CD8-positive, alpha-beta memory T cell (primary cell): ENCODE measurements at regions of chr12 and their contacts with region 1.

Region 1: DNA sequence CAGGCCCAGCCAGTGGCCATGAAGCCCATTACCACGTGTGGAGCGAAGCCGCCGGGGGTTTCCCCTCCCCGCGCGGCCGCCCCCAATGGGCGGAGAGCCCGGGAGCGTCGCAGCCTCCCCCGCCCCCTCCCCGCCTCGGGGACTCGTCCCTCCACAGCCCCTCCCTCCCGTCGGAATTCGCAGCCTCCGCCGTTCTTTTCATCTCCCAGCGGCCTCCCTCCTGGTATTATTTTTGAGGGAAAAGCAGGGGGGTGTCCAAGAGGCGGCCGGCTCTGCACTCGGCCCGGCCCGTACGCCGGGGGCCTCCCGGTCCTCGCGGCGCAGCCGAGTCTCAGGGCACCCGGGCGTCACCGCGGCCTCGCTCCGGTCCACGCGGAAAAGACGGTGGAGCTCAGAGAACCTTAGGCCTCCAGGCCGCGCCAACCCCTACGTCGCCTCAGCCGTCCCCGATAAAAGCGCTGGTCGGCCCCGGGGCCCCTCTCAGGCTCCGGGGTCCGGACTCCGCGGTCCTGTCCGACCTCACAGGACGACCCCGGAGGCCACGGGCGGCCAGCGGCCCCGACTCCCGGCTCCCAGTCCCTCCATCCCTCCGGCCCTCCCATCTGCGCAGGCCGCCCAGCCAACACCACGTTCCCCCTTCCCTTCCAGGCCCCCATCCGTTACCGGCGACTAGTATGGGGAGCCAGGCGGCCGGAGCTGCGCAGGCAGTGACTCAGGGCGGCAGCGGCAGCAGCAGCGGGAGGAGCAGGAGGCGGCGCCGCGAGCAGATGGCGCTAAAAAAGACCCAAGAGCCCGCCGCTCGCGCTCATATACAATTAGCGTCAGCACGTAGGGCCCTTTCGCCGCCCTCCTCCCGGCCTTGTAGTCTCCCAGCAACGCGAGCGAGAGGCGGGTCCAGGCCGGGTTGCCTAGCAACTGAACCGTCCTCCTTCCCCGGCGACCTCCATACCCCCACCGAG is at the start of gene NAP1L1:
- DNase-seq: peak; percentile 94 to 99 (median 96)
- H3K4me3 ChIP-seq: peak within 1 kb of the TSS; percentile 68
- H3K4me3 Mint-ChIP-seq: peak within 1 kb of the TSS; percentile 96 to 100 (median 98)
- H3K27ac ChIP-seq: peak within 1 kb of the TSS; percentile 97
- H3K27ac Mint-ChIP-seq: peak within 1 kb of the TSS; percentile 98 to 100 (median 99)
- H3K4me1 ChIP-seq: peaks cover 39% of the 10 kb centered on the region
- H3K4me1 Mint-ChIP-seq: peaks cover 50 to 66% (median 59%) of the 10 kb centered on the region in 3 donors
- H3K27me3 ChIP-seq: no peaks in the 10 kb centered on the region
- H3K27me3 Mint-ChIP-seq: peaks cover 0 to 4% of the 10 kb centered on the region in 2 donors
- total RNA-seq, gene NAP1L1: 926 to 964 TPM

Region 2: GRCh38 chr12:76348079-76348901 is 264.1 kb after region 1 on chr12 and contains the start of gene BBS10:
- CTCF ChIA-PET with region 1: no interaction called
- POLR2A ChIA-PET with region 1: interaction called, 11 read pairs
- DNase-seq: peak; percentile 73 to 88 (median 82)
- H3K4me3 ChIP-seq: peak within 1 kb of the TSS; percentile 85
- H3K4me3 Mint-ChIP-seq: peak within 1 kb of the TSS; percentile 94 to 100 (median 97)
- H3K27ac ChIP-seq: peak within 1 kb of the TSS; percentile 73
- H3K27ac Mint-ChIP-seq: peak within 1 kb of the TSS; percentile 82 to 94 (median 92)
- H3K4me1 ChIP-seq: peaks cover 17% of the 10 kb centered on the region
- H3K4me1 Mint-ChIP-seq: peaks cover 27 to 37% (median 32%) of the 10 kb centered on the region in 3 donors
- H3K27me3 ChIP-seq: no peaks in the 10 kb centered on the region
- H3K27me3 Mint-ChIP-seq: peaks cover 0 to 2% of the 10 kb centered on the region in 2 donors
- total RNA-seq, gene BBS10: 5.9 to 6.1 TPM

Region 3: GRCh38 chr12:76559400-76560085 is 475.4 kb after region 1 on chr12 and contains the start of gene OSBPL8:
- CTCF ChIA-PET with region 1: no interaction called
- POLR2A ChIA-PET with region 1: interaction called, 19 read pairs
- DNase-seq: peak; percentile 88 to 96 (median 94)
- H3K4me3 ChIP-seq: peak within 1 kb of the TSS; percentile 89
- H3K4me3 Mint-ChIP-seq: peak within 1 kb of the TSS; percentile 92 to 99 (median 97)
- H3K27ac ChIP-seq: peak within 1 kb of the TSS; percentile 98
- H3K27ac Mint-ChIP-seq: peak within 1 kb of the TSS; percentile 94 to 99 (median 96)
- H3K4me1 ChIP-seq: peaks cover 44% of the 10 kb centered on the region
- H3K4me1 Mint-ChIP-seq: peaks cover 35 to 49% (median 40%) of the 10 kb centered on the region in 3 donors
- H3K27me3 ChIP-seq: no peaks in the 10 kb centered on the region
- H3K27me3 Mint-ChIP-seq: peaks cover 0 to 3% of the 10 kb centered on the region in 2 donors
- total RNA-seq, gene OSBPL8: 87.3 to 90.7 TPM